ENCODE measurements at regions of chrX and their contacts with region 1.

Region 1: DNA sequence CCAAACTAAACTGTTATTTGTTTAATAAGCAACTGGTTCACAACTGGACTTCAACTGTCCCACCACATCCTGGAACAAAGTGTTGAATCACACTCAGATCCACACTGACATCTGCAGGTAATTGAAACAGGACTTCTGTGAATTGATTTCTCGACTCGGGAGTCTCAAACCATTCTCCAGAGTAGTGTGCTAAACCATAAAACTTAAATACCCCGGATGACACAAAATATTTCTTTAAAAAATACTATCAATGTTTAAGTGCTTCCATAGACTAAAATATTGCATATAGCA is 95.4 kb upstream of the PLAC1 start:
- DNase-seq: no peak
- ATAC-seq: no peak
- H3K4me3 ChIP-seq: no peak overlapping the region
- H3K27ac ChIP-seq: no peak overlapping the region
- H3K4me1 ChIP-seq: no peaks in the 10 kb centered on the region
- H3K27me3 ChIP-seq: peaks cover 0 to 57% (median 0%) of the 10 kb centered on the region in 7 donors
- CTCF ChIP-seq: peak in 7 of 9 donors; percentile 36 to 61 (median 43)

Region 2: GRCh38 chrX:134484039-134484438 is 269.6 kb before region 1 on chrX:
- intact Hi-C with region 1: loop called in 4 of 10 experiments (anchors 5 to 10 kb)
- DNase-seq: no peak
- ATAC-seq: no peak
- H3K4me3 ChIP-seq: no peak overlapping the region
- H3K27ac ChIP-seq: no peak overlapping the region
- H3K4me1 ChIP-seq: no peaks in the 10 kb centered on the region
- H3K27me3 ChIP-seq: no peaks in the 10 kb centered on the region
- CTCF ChIP-seq: peak; percentile 29 to 73 (median 61)

Region 3: GRCh38 chrX:134512566-134512965 is 241.1 kb before region 1 on chrX:
- intact Hi-C with region 1: loop called in 1 of 10 experiments (anchors 10 kb)
- DNase-seq: no peak
- ATAC-seq: no peak
- H3K4me3 ChIP-seq: no peak overlapping the region
- H3K27ac ChIP-seq: no peak overlapping the region
- H3K4me1 ChIP-seq: no peaks in the 10 kb centered on the region
- H3K27me3 ChIP-seq: peaks cover 0 to 7% (median 0%) of the 10 kb centered on the region in 7 donors
- CTCF ChIP-seq: no peak

Region 4: DNA sequence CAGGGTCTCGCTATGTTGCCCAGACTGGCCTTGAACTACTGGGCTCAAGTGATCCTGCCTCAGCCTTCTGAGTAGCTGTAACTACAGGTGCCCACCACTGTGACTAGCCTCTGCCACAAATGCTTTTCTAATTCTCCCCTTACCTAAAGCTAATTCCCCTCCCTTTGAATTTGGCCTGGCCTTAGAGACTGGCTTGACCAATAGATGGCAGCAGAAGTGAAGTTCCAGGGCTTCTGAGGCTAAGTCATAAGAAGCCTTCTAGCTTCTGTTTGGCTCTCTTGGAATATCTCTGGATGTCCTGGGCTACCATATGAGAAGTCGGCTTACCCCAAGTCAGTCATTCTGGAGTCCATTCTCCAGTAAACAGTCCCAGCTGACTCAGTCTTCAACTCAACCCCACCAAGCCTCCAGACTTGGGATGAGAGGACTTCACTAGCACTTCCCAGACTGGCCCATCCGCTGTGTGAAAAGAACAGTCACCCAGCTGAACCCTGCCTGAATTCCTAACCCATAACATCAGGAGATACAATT is 232.7 kb before region 1 on chrX:
- intact Hi-C with region 1: loop called (anchors 2 to 10 kb)
- DNase-seq: peak in 1 of 2 donors; percentile 22
- ATAC-seq: peak in 7 of 8 donors; percentile 56 to 72 (median 67)
- H3K4me3 ChIP-seq: no peak overlapping the region
- H3K27ac ChIP-seq: no peak overlapping the region
- H3K4me1 ChIP-seq: no peaks in the 10 kb centered on the region
- H3K27me3 ChIP-seq: no peaks in the 10 kb centered on the region
- CTCF ChIP-seq: peak; percentile 24 to 68 (median 58)

Measured in heart right ventricle (tissue), 16 donors.